GM12878 (cell line): ENCODE measurements at regions of chr1 and their contacts with region 1.

Region 1: DNA sequence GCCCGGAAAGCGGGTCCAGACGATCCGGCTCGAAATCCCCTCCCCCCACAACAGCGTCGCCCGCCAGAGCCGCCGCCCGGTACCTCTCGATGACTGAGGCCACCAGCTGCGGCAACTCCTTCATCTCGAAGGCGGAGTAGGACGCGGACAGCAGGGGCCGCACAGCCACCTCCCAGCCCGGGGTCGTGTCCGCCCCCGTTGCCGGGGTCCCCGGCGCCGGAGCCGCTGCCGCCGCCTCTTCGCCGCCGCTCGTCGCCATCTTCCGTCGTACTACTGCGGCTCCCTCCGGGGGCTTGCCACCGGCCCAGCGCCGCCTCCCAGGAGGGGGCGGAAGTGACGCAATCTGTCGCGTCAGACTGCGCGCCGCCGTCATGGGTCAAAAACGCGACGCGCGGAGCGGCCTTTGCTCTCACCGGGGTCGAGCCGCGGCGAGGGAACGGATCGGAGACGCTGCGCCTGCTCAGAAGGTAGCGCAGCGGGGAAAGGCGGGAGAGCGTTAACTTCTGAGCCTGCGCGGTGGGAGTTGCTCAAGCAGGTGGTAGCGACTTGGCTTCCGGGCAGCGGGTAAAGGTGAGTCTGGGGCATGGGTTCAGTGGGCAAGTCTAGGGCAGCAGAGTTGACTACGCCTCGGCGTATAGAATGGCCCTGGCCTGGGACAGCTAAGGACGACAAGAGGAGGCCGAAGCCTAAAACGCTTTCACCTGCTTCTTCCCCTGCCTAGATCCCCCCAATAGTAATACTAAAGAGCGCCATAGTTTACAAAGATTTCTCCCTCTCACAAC is at the start of gene UBR4:
- DNase-seq: peak; percentile 88
- ATAC-seq: peak; percentile 91
- H3K4me3 ChIP-seq: peak within 1 kb of the TSS; percentile 87
- H3K27ac ChIP-seq: peak within 1 kb of the TSS; percentile 95
- H3K4me1 ChIP-seq: peaks cover 12% of the 10 kb centered on the region
- H3K27me3 ChIP-seq: no peaks in the 10 kb centered on the region
- CTCF ChIP-seq: no peak
- EP300 ChIP-seq: 0 out of 4 replicates have a peak, but pooled peaks of 1 of the 2 experiments have one; percentile 37
- POLR2A ChIP-seq: peak; percentile 97
- RAD21 ChIP-seq: no peak
- polyA plus RNA-seq, gene UBR4: 50.6 to 60.2 TPM

Region 2: DNA sequence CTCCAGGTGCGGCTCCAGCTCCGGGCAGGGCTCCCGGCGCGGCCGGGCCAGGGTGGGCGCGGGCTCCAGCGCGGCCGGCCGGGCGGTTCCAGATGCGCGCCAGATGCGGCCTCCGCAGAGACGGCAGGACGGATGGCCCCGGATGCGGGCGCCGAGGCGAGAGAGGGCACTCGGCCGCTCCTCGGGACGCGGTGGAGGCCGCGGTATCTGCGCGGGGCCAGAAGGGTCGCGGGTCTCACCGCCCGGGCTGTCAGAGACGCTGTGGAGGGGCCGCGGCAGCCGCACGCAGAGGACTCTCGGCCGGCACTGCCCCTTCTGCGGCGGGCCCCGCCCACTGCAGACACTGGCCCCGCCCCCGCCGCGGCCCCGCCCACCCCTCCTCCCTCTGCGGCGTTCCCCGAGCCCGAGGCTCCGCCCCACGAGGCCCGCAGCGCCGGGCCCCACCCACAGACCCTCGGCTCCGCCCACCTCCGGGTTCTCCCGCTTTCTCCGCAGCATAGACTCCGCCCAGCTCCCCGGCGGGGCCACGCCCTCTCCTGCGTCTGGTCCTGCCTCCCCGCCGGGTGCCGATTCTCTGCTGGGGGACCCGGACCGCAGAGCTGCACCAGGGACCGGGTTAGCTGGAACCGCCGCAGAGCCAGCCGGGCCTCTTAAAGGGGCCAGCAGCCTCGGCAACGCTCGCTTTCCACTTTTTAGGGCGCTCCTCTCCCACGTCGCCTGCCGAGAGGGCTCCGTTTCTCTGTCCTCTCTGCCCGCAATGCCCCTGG is 253.6 kb before region 1 on chr1 and contains the start of gene IFFO2:
- CTCF ChIA-PET with region 1: interaction called, 3 read pairs
- POLR2A ChIA-PET with region 1: interaction called, 6 read pairs
- RAD21 ChIA-PET with region 1: no interaction called
- SMC1A ChIA-PET with region 1: no interaction called
- in situ Hi-C with region 1: no loop called
- intact Hi-C with region 1: loop called (anchors 10 kb)
- DNase-seq: peak; percentile 34
- ATAC-seq: peak; percentile 80
- H3K4me3 ChIP-seq: peak within 1 kb of the TSS; percentile 70
- H3K27ac ChIP-seq: peak within 1 kb of the TSS; percentile 8; the same call in 1 of the 2 replicates
- H3K4me1 ChIP-seq: peaks cover 41% of the 10 kb centered on the region
- H3K27me3 ChIP-seq: peaks cover 1 to 3% of the 10 kb centered on the region in 2 experiments; a peak in 3 of 4 replicates
- CTCF ChIP-seq: no peak
- EP300 ChIP-seq: no peak
- POLR2A ChIP-seq: peak; percentile 81
- RAD21 ChIP-seq: no peak
- polyA plus RNA-seq, gene IFFO2: 1.2 to 1.9 TPM

Region 3: GRCh38 chr1:19154876-19155275 is 55.3 kb before region 1 on chr1:
- CTCF ChIA-PET with region 1: no interaction called
- POLR2A ChIA-PET with region 1: no interaction called
- RAD21 ChIA-PET with region 1: no interaction called
- SMC1A ChIA-PET with region 1: no interaction called
- in situ Hi-C with region 1: no loop called
- intact Hi-C with region 1: no loop called
- DNase-seq: no peak
- ATAC-seq: no peak
- H3K4me3 ChIP-seq: no peak overlapping the region
- H3K27ac ChIP-seq: no peak overlapping the region
- H3K4me1 ChIP-seq: no peaks in the 10 kb centered on the region
- H3K27me3 ChIP-seq: no peaks in the 10 kb centered on the region
- CTCF ChIP-seq: no peak
- EP300 ChIP-seq: no peak
- POLR2A ChIP-seq: no peak
- RAD21 ChIP-seq: no peak

Region 4: GRCh38 chr1:19240673-19241538 is 30.7 kb after region 1 on chr1:
- CTCF ChIA-PET with region 1: interaction called, 17 read pairs
- POLR2A ChIA-PET with region 1: no interaction called
- RAD21 ChIA-PET with region 1: interaction called, 4 read pairs
- SMC1A ChIA-PET with region 1: interaction called, 3 read pairs
- in situ Hi-C with region 1: no loop called
- intact Hi-C with region 1: no loop called
- DNase-seq: no peak
- ATAC-seq: peak; percentile 97
- H3K4me3 ChIP-seq: no peak overlapping the region
- H3K27ac ChIP-seq: no peak overlapping the region
- H3K4me1 ChIP-seq: no peaks in the 10 kb centered on the region
- H3K27me3 ChIP-seq: no peaks in the 10 kb centered on the region
- CTCF ChIP-seq: peak; percentile 89 to 96 (median 94)
- EP300 ChIP-seq: no peak
- POLR2A ChIP-seq: no peak
- RAD21 ChIP-seq: peak; percentile 73

Region 5: GRCh38 chr1:19251305-19252196 is 41.4 kb after region 1 on chr1 and contains the starts of genes EMC1 and MRTO4:
- CTCF ChIA-PET with region 1: no interaction called
- POLR2A ChIA-PET with region 1: interaction called, 4 read pairs
- RAD21 ChIA-PET with region 1: interaction called, 4 read pairs
- SMC1A ChIA-PET with region 1: interaction called, 3 read pairs
- in situ Hi-C with region 1: no loop called
- intact Hi-C with region 1: loop called (anchors 1 kb)
- DNase-seq: peak; percentile 65
- ATAC-seq: peak; percentile 93
- H3K4me3 ChIP-seq: peak within 1 kb of the TSS; percentile 98
- H3K27ac ChIP-seq: peak within 1 kb of the TSS; percentile 97
- H3K4me1 ChIP-seq: peaks cover 13% of the 10 kb centered on the region
- H3K27me3 ChIP-seq: no peaks in the 10 kb centered on the region
- CTCF ChIP-seq: no peak
- EP300 ChIP-seq: no peak; a peak in 1 of 4 replicates
- POLR2A ChIP-seq: peak; percentile 99
- RAD21 ChIP-seq: no peak
- polyA plus RNA-seq, gene EMC1: 12.2 to 12.8 TPM
- polyA plus RNA-seq, gene MRTO4: 43.5 to 64.8 TPM